ENCODE measurements at regions of chr11 and their contacts with region 1.

Region 1: DNA sequence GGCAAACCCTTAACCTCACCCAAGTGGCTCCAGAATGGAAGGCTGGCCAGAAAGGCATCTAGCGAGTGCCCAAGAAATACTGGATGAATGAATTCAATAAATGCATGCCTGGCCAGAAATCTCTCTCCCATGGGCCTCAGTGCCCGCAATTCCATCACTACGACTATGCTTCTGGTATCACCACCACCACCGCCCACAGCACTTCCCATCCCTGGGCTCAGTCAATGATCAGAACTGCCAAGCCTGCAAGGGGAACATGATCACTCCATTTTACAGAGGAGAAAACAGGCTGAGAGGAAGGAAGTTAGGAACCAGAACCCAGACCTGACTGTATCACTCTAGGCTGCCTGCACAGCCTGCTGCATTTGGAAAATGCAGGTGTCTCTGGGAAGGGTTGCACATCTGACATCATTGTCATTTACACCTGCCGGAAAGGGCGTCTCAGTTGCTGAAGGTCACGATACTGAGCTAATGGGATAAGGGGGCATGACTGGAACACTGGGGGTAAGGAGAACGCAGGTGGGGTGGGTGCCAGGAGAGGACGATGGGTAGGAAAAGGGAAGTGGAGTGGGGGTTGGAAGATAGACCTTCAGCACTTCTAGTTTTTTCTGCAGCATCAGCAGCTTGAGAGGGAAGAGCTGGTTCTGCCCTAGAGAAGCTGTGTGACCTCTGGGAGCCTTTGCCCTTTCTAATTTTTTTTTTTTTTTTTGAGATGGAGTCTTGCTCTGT is 3.2 kb downstream of the GPR152 start:
- DNase-seq: no peak
- H3K4me3 ChIP-seq: no peak overlapping the region
- H3K27ac ChIP-seq: no peak overlapping the region
- H3K4me1 ChIP-seq: peaks cover under 1% of the 10 kb centered on the region
- H3K27me3 ChIP-seq: no peaks in the 10 kb centered on the region
- CTCF ChIP-seq: no peak

Region 2: DNA sequence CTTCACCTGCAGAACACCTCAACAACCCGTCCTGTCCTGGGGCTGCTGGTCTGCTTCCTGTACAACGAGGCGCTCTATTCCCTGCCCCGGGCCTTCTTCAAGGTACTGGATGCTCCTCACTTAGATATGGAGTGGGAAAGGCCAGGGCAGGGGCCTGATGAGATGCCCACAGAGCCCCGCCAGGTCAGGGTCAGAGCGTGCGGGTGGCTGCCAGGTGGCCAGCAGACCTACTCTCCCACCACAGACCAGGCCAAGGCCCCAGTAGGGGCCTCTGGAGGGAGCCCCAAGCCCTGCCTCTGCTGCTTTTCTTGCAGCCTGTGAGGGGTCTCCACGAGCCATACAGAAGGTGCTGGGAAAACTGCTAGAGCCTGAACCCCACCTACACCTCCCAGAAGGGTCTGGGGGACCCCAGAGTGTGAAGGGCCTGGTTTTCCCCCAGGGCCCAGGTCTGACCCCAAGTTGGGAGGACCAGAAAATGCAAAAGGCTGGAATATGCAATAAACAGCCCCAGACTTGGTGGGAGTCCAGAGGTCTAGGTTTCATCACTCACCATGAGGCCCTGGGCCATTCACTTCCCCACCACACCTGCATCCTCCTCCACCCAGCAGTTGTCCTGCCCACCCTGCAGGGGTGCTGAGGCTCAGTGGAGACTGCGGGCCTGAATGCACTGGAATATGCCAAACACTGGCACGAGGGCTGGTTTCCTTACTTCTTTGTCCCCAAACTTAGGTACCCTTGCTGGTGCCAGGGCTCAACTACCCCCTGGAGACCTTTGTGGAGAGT is 918.2 kb before region 1 on chr11:
- CTCF ChIA-PET with region 1: no interaction called
- POLR2A ChIA-PET with region 1: no interaction called
- intact Hi-C with region 1: no loop called
- DNase-seq: no peak
- H3K4me3 ChIP-seq: no peak overlapping the region
- H3K27ac ChIP-seq: no peak overlapping the region
- H3K4me1 ChIP-seq: no peaks in the 10 kb centered on the region
- H3K27me3 ChIP-seq: no peaks in the 10 kb centered on the region
- CTCF ChIP-seq: no peak

Region 3: DNA sequence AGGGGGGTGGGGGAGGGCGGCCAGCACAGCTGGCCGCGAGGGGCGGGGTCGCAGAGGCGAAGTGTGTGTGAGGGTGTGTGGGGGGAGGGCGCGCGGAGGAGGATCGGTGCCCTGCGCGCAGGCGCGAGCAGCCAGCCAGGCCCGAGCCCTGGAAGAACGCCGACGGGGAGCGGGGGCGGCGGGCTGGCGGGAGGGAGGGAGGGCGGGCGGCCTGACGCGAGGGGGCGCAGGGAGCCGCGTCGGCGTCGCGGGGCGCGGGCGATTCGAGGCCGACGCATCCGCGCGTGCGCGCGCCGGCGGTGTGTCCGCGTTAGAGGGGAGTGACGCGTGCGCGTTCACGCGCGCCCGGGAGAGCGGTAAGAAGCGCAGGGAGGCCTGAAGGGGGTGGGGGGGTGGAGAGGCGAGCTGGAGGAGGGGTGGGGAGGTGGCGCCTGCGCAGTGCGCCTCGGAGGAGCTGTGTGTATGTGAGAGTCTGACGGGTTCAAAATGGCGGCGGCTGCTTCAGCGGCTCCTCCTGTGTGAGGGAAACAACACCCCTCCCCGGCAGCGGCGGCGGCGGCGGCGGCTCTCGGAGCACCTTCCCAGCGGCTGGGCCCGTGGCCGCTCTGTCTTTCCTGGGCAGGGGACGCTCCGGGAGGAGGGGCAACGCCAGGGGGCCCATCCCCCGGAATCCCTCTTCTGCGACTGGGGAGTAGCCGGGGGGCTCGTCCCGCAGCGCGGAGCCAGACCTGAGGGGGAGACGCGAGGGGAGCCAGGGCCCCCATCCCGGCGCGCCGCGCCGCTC is 330.3 kb before region 1 on chr11 and contains the start of gene KDM2A:
- CTCF ChIA-PET with region 1: no interaction called
- POLR2A ChIA-PET with region 1: interaction called, 12 read pairs
- intact Hi-C with region 1: no loop called
- DNase-seq: peak; percentile 100
- H3K4me3 ChIP-seq: peak within 1 kb of the TSS; percentile 85
- H3K27ac ChIP-seq: peak within 1 kb of the TSS; percentile 93
- H3K4me1 ChIP-seq: peaks cover 10% of the 10 kb centered on the region
- H3K27me3 ChIP-seq: no peaks in the 10 kb centered on the region
- CTCF ChIP-seq: no peak
- total RNA-seq, gene KDM2A: 105 and 121 TPM in 2 replicates

Region 4: DNA sequence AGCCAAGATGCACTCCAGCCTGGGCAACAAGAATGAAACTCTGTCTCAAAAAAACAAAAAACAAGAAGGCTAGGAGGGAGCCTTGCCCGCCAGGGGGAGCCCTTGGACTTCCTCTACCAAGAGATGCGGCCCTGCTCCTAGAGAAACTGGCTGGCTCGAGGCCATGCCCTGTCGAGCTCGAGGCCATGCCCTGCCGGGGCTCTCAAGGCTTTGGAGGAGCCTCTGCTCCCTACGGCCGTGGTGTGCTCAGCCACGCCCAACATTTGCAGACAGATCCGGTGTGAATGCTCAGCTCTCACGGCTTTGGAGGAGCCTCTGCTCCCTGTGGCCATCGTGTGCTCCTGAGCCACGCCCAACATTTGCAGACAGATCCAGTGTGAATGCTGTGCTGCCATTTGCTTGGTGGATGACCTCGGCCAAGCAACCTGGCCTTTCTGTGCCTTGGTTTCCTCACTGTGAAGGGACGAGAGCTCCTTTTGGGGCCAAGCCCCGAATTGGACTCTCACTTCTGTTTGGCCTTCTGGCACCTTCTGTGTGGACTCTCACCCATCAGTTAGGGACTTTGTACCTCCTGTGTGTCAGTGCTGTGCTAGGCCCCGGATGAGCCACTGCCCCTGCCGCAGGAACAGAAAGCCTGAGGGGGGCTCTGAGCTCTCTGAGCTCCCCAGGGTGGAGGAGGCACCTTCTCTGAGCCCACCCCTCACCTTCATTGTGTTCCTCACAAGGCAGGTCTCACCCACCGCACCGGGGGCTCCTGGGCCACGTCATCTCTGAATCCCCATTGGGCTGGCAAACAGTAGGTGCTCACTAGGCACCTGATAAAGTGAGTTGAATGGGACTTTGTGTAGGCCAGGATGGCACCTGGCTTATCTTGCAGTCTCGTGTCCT is 808.4 kb after region 1 on chr11:
- CTCF ChIA-PET with region 1: no interaction called
- POLR2A ChIA-PET with region 1: no interaction called
- intact Hi-C with region 1: no loop called
- DNase-seq: peak; percentile 95
- H3K4me3 ChIP-seq: no peak overlapping the region
- H3K27ac ChIP-seq: no peak overlapping the region
- H3K4me1 ChIP-seq: peaks cover 17% of the 10 kb centered on the region
- H3K27me3 ChIP-seq: no peaks in the 10 kb centered on the region
- CTCF ChIP-seq: peak; percentile 85

Measured in A673 (cell line).